CD8-positive, alpha-beta T cell (primary cell): ENCODE measurements at regions of chr15 and their contacts with region 1.

Region 1: DNA sequence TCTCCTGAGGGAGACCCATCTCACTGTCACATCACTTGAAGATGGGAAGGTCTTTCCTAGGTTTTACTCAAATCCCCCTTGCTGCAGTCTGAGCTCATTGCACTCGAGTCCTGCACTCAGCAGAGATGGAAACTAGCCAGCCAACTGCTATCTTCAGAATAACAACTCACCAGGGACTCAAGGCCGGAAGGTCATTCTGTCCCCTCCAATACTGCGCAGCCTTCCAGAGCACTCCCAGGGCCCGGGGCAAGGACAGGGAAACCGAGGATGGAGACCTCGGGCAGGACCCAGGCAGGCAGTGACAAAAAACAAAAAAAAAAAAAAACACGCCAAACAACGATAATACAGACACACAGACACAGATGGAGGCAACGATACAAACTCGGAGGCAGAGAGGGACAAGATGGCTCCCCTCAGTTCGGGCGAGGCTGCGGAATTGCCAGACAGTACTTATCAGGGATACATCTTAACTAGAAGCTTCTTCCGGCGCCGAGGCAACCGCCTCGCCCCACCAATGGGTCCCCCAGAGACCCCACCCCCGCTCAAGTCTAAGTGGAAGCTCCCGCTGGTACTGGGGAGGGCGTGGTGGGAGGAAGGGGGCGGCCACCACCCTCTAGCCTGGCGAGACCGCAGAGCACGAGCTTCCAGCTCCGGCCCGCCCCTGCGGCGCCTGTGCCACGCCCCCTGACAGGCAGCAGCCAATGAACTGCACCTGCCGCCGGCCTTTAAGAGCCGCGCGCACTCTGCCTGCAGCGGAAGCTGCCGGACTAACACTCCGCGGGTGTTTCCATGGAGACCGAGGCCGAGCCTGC is 7.0 kb upstream of the MAP1A start:
- DNase-seq: peak; percentile 88 to 98 (median 96)
- ATAC-seq: peak; percentile 90
- H3K4me3 ChIP-seq: peak overlapping the region; percentile 65 to 81
- H3K4me3 Mint-ChIP-seq: peak overlapping the region; percentile 94
- H3K27ac ChIP-seq: peak overlapping the region; percentile 74 to 82
- H3K27ac Mint-ChIP-seq: peak overlapping the region; percentile 96
- H3K4me1 ChIP-seq: peaks cover 21% of the 10 kb centered on the region
- H3K4me1 Mint-ChIP-seq: peaks cover 27% of the 10 kb centered on the region
- H3K27me3 ChIP-seq: no peaks in the 10 kb centered on the region
- H3K27me3 Mint-ChIP-seq: no peaks in the 10 kb centered on the region
- CTCF ChIP-seq: peak; percentile 10

Region 2: GRCh38 chr15:43185157-43186017 is 325.0 kb before region 1 on chr15 and contains the start of gene CCNDBP1:
- CTCF ChIA-PET with region 1: no interaction called
- POLR2A ChIA-PET with region 1: interaction called, 3 read pairs
- intact Hi-C with region 1: loop called in 1 of 2 experiments (anchors 5 kb)
- DNase-seq: peak; percentile 73 to 93 (median 86)
- ATAC-seq: peak; percentile 75
- H3K4me3 ChIP-seq: peak within 1 kb of the TSS; percentile 82 to 97
- H3K4me3 Mint-ChIP-seq: peak within 1 kb of the TSS; percentile 97
- H3K27ac ChIP-seq: peak within 1 kb of the TSS; percentile 87 to 91
- H3K27ac Mint-ChIP-seq: peak within 1 kb of the TSS; percentile 98
- H3K4me1 ChIP-seq: peaks cover 18% of the 10 kb centered on the region
- H3K4me1 Mint-ChIP-seq: peaks cover 43% of the 10 kb centered on the region
- H3K27me3 ChIP-seq: no peaks in the 10 kb centered on the region
- H3K27me3 Mint-ChIP-seq: no peaks in the 10 kb centered on the region
- CTCF ChIP-seq: peak; percentile 56
- total RNA-seq, gene CCNDBP1: 80.3 to 81.1 TPM

Region 3: DNA sequence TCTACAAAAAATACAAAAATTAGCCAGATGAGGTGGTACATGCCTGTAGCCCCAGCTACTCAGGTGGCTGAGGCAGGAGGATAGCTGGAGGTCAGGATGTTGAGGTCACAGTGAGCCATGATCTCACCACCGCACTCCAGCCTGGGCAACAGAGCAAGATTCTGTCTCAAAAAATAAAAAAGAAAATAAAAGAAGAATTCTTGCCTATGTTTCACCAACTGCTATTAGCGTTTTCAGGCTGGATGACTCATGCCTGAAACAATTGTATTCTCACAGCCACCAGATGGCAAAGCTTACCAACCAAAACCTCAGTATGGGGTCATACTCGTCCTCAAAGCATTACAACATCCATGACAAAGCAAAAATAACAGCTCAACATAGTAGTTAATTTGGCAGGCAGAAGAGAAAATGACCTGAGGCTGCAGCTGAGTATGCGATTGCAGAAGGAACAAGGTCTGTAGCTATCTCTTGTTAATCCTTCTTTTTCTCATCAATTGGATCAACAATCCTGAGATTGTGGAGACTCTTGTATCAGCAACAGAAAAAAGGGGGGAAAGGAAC is 69.6 kb before region 1 on chr15:
- CTCF ChIA-PET with region 1: interaction called, 13 read pairs
- POLR2A ChIA-PET with region 1: no interaction called
- intact Hi-C with region 1: loop called in 1 of 2 experiments (anchors 2 kb)
- DNase-seq: peak in 2 of 9 experiments; percentile 41 to 58
- ATAC-seq: peak; percentile 57
- H3K4me3 ChIP-seq: no peak overlapping the region
- H3K4me3 Mint-ChIP-seq: no peak overlapping the region
- H3K27ac ChIP-seq: no peak overlapping the region
- H3K27ac Mint-ChIP-seq: peak overlapping the region; percentile 45
- H3K4me1 ChIP-seq: no peaks in the 10 kb centered on the region
- H3K4me1 Mint-ChIP-seq: no peaks in the 10 kb centered on the region
- H3K27me3 ChIP-seq: no peaks in the 10 kb centered on the region
- H3K27me3 Mint-ChIP-seq: no peaks in the 10 kb centered on the region
- CTCF ChIP-seq: no peak

Region 4: DNA sequence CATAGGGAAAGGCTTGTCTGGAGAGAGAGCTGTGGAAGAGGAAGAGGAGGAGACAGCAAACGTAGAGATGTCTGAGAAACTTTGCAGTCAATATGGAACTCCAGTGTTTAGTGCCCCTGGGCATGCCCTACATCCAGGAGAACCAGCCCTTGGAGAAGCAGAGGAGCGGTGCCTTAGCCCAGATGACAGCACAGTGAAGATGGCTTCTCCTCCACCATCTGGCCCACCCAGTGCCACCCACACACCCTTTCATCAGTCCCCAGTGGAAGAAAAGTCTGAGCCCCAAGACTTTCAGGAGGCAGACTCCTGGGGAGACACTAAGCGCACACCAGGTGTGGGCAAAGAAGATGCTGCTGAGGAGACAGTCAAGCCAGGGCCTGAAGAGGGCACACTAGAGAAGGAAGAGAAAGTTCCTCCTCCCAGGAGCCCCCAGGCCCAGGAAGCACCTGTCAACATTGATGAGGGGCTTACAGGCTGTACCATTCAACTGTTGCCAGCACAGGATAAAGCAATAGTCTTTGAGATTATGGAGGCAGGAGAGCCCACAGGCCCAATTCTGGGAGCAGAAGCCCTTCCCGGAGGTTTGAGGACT is 13.9 kb after region 1 on chr15:
- CTCF ChIA-PET with region 1: interaction called, 10 read pairs
- POLR2A ChIA-PET with region 1: interaction called, 8 read pairs
- intact Hi-C with region 1: no loop called
- DNase-seq: peak in 1 of 9 experiments; percentile 17
- ATAC-seq: no peak
- H3K4me3 ChIP-seq: no peak overlapping the region
- H3K4me3 Mint-ChIP-seq: no peak overlapping the region
- H3K27ac ChIP-seq: no peak overlapping the region
- H3K27ac Mint-ChIP-seq: no peak overlapping the region
- H3K4me1 ChIP-seq: no peaks in the 10 kb centered on the region
- H3K4me1 Mint-ChIP-seq: peaks cover 8% of the 10 kb centered on the region
- H3K27me3 ChIP-seq: no peaks in the 10 kb centered on the region
- H3K27me3 Mint-ChIP-seq: peaks cover 3% of the 10 kb centered on the region
- CTCF ChIP-seq: no peak

Region 5: GRCh38 chr15:43800286-43801141 is 290.1 kb after region 1 on chr15 and contains the start of gene HYPK:
- CTCF ChIA-PET with region 1: no interaction called
- POLR2A ChIA-PET with region 1: no interaction called
- intact Hi-C with region 1: loop called in 1 of 2 experiments (anchors 5 kb)
- DNase-seq: peak; percentile 83 to 95 (median 93)
- ATAC-seq: peak; percentile 99
- H3K4me3 ChIP-seq: peak within 1 kb of the TSS; percentile 63 to 98
- H3K4me3 Mint-ChIP-seq: peak within 1 kb of the TSS; percentile 99
- H3K27ac ChIP-seq: peak within 1 kb of the TSS; percentile 60 to 93
- H3K27ac Mint-ChIP-seq: peak within 1 kb of the TSS; percentile 98
- H3K4me1 ChIP-seq: peaks cover 25% of the 10 kb centered on the region
- H3K4me1 Mint-ChIP-seq: peaks cover 45% of the 10 kb centered on the region
- H3K27me3 ChIP-seq: no peaks in the 10 kb centered on the region
- H3K27me3 Mint-ChIP-seq: no peaks in the 10 kb centered on the region
- CTCF ChIP-seq: no peak
- total RNA-seq, gene HYPK: 10.9 to 14.0 TPM